ENCODE measurements at regions of chr6 and their contacts with region 1.

Region 1: GRCh38 chr6:38012573-38012972 is 193.0 kb downstream of the ZFAND3 start:
- DNase-seq: no peak
- H3K4me3 ChIP-seq: no peak overlapping the region
- H3K27ac ChIP-seq: no peak overlapping the region
- H3K4me1 ChIP-seq: no peaks in the 10 kb centered on the region
- H3K27me3 ChIP-seq: no peaks in the 10 kb centered on the region
- CTCF ChIP-seq: peak in 3 of 4 experiments; percentile 20 to 51 (median 32)
- POLR2A ChIP-seq: no peak

Region 2: GRCh38 chr6:37791156-37791919 is 221.2 kb before region 1 on chr6:
- intact Hi-C with region 1: loop called (anchors 10 kb)
- DNase-seq: peak; percentile 90
- H3K4me3 ChIP-seq: no peak overlapping the region
- H3K27ac ChIP-seq: no peak overlapping the region
- H3K4me1 ChIP-seq: no peaks in the 10 kb centered on the region
- H3K27me3 ChIP-seq: no peaks in the 10 kb centered on the region
- CTCF ChIP-seq: peak; percentile 76 to 96 (median 87)
- POLR2A ChIP-seq: no peak

Region 3: GRCh38 chr6:37940074-37940847 is 72.3 kb before region 1 on chr6:
- intact Hi-C with region 1: no loop called
- DNase-seq: peak; percentile 16
- H3K4me3 ChIP-seq: no peak overlapping the region
- H3K27ac ChIP-seq: no peak overlapping the region
- H3K4me1 ChIP-seq: no peaks in the 10 kb centered on the region
- H3K27me3 ChIP-seq: no peaks in the 10 kb centered on the region
- CTCF ChIP-seq: no peak
- POLR2A ChIP-seq: no peak

Region 4: GRCh38 chr6:38080889-38081288 is 68.3 kb after region 1 on chr6:
- intact Hi-C with region 1: no loop called
- DNase-seq: peak; percentile 38
- H3K4me3 ChIP-seq: no peak overlapping the region
- H3K27ac ChIP-seq: no peak overlapping the region
- H3K4me1 ChIP-seq: peaks cover 5% of the 10 kb centered on the region
- H3K27me3 ChIP-seq: no peaks in the 10 kb centered on the region
- CTCF ChIP-seq: no peak
- POLR2A ChIP-seq: no peak

Region 5: GRCh38 chr6:38110481-38110971 is 98.0 kb after region 1 on chr6:
- intact Hi-C with region 1: no loop called
- DNase-seq: no peak
- H3K4me3 ChIP-seq: no peak overlapping the region
- H3K27ac ChIP-seq: no peak overlapping the region
- H3K4me1 ChIP-seq: no peaks in the 10 kb centered on the region
- H3K27me3 ChIP-seq: no peaks in the 10 kb centered on the region
- CTCF ChIP-seq: no peak
- POLR2A ChIP-seq: no peak

Region 6: GRCh38 chr6:38271081-38271752 is 258.6 kb after region 1 on chr6:
- intact Hi-C with region 1: no loop called
- DNase-seq: no peak
- H3K4me3 ChIP-seq: no peak overlapping the region
- H3K27ac ChIP-seq: no peak overlapping the region
- H3K4me1 ChIP-seq: no peaks in the 10 kb centered on the region
- H3K27me3 ChIP-seq: no peaks in the 10 kb centered on the region
- CTCF ChIP-seq: no peak
- POLR2A ChIP-seq: no peak